ENCODE measurements at regions of chr4 and their contacts with region 1.

Region 1: DNA sequence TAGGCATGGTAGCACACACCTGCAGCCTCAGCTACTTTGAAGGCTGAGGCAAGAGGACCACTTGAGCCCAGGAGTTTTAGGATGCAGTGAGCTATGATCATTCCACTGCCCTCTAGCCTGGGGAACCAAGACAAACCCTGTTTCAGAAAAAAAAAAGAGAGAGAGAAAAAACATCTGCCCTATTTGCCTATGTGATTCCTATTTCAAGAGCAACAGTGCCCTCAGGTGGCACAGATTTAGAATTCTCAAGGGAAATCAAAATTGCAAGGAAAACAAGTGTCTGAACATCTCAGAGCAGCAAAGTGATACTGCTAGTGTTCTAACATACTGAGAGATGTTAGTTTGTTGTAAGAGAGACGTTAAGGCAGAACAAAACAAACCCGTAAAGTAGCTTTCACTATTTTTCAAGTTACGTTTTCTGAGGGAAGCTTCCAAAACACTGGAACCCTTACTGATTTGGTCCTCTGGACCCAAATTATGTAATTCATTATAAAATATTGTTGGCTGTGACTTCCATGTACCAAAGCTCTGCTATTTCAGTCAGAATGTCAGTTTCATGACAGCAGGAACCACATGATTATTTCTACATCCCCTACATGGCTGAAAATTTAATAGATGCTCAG is 7.9 kb downstream of the BDH2 start:
- DNase-seq: peak; percentile 61
- ATAC-seq: peak; percentile 71
- H3K4me3 Mint-ChIP-seq: no peak overlapping the region
- H3K27ac Mint-ChIP-seq: peak overlapping the region; percentile 34
- H3K4me1 Mint-ChIP-seq: peaks cover 17% of the 10 kb centered on the region
- H3K27me3 Mint-ChIP-seq: no peaks in the 10 kb centered on the region

Region 2: DNA sequence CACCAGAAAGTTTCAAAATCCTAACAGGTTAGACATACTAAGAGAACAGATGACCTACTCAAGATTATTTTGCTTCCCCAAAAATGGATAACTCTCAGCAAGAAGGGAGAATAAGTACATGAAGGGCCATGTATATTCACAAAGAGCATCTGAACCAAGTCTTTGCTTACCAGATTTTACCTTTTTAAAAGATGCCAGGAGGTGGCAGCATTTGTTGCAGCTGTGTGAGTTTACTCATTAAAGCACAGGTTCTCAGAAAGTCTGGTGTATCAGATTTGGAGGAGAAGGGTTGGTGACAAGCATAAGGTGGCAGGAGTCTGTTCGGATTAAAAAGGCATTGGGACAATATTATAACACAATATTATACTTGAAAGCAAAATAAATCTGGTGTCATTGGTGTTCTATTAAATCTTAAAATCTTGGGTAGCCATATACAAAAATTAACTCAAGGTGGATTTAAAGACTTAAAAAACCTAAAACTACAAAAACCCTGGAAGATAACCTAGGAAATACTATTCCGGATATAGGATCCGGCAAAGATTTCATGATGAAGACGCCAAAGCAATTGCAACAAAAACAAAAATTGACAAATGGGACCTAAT is 641.9 kb before region 1 on chr4:
- CTCF ChIA-PET with region 1: interaction called, 3 read pairs
- POLR2A ChIA-PET with region 1: no interaction called
- intact Hi-C with region 1: loop called in 1 of 2 experiments (anchors 5 kb)
- DNase-seq: peak; percentile 69
- ATAC-seq: peak; percentile 86
- H3K4me3 Mint-ChIP-seq: no peak overlapping the region
- H3K27ac Mint-ChIP-seq: no peak overlapping the region
- H3K4me1 Mint-ChIP-seq: peaks cover 54% of the 10 kb centered on the region
- H3K27me3 Mint-ChIP-seq: no peaks in the 10 kb centered on the region

Region 3: DNA sequence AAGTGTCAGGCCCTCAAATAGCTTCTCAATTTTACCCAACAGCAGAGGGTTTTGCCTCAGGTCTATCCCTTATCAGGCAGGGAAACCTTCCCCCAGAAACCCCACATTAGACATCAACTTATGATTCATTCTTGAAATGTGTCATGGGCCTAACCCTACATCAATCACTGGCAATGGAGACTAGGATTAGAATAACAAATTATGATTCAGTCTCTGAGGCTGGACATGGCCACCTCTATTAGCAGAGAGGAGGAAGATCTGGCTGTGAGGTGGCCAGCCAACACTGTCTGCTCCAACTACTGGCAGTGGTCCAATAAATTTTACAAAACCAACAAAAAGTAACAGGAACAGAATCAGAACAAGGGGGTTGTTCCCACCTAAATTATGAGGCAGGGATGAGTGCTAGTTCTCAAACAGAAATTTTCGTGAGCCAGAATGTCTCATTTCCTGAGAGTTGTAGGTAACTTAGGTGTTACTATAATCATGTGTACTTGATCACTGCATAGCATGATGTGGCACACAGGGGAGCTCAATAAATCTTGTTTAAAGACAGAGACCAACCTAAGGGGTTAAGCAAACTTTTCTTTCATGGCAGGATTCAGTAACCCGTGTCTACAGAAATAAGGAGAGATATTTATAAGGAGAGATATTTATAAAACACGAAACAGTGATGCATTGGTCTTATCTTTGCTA is 463.7 kb before region 1 on chr4:
- CTCF ChIA-PET with region 1: interaction called, 5 read pairs
- POLR2A ChIA-PET with region 1: no interaction called
- intact Hi-C with region 1: loop called in 1 of 2 experiments (anchors 1 kb)
- DNase-seq: peak; percentile 48
- ATAC-seq: peak; percentile 85
- H3K4me3 Mint-ChIP-seq: peak overlapping the region; percentile 50
- H3K27ac Mint-ChIP-seq: peak overlapping the region; percentile 86
- H3K4me1 Mint-ChIP-seq: peaks cover 69% of the 10 kb centered on the region
- H3K27me3 Mint-ChIP-seq: no peaks in the 10 kb centered on the region

Region 4: GRCh38 chr4:102787096-102787881 is 304.4 kb before region 1 on chr4:
- CTCF ChIA-PET with region 1: no interaction called
- POLR2A ChIA-PET with region 1: no interaction called
- intact Hi-C with region 1: no loop called
- DNase-seq: peak; percentile 15
- ATAC-seq: peak; percentile 74
- H3K4me3 Mint-ChIP-seq: no peak overlapping the region
- H3K27ac Mint-ChIP-seq: peak overlapping the region; percentile 75
- H3K4me1 Mint-ChIP-seq: peaks cover 29% of the 10 kb centered on the region
- H3K27me3 Mint-ChIP-seq: no peaks in the 10 kb centered on the region

Region 5: GRCh38 chr4:102981005-102981404 is 110.7 kb before region 1 on chr4:
- CTCF ChIA-PET with region 1: no interaction called
- POLR2A ChIA-PET with region 1: no interaction called
- intact Hi-C with region 1: no loop called
- DNase-seq: no peak
- ATAC-seq: no peak
- H3K4me3 Mint-ChIP-seq: no peak overlapping the region
- H3K27ac Mint-ChIP-seq: no peak overlapping the region
- H3K4me1 Mint-ChIP-seq: no peaks in the 10 kb centered on the region
- H3K27me3 Mint-ChIP-seq: no peaks in the 10 kb centered on the region

Region 6: GRCh38 chr4:103008875-103009729 is 82.6 kb before region 1 on chr4:
- CTCF ChIA-PET with region 1: interaction called, 15 read pairs
- POLR2A ChIA-PET with region 1: no interaction called
- intact Hi-C with region 1: no loop called
- DNase-seq: no peak
- ATAC-seq: peak; percentile 95
- H3K4me3 Mint-ChIP-seq: no peak overlapping the region
- H3K27ac Mint-ChIP-seq: no peak overlapping the region
- H3K4me1 Mint-ChIP-seq: no peaks in the 10 kb centered on the region
- H3K27me3 Mint-ChIP-seq: peaks cover 2% of the 10 kb centered on the region

Region 7: GRCh38 chr4:103075901-103076739 is 15.6 kb before region 1 on chr4:
- CTCF ChIA-PET with region 1: interaction called, 16 read pairs
- POLR2A ChIA-PET with region 1: no interaction called
- intact Hi-C with region 1: no loop called
- DNase-seq: peak; percentile 79
- ATAC-seq: peak; percentile 63
- H3K4me3 Mint-ChIP-seq: peak overlapping the region; percentile 84
- H3K27ac Mint-ChIP-seq: peak overlapping the region; percentile 99
- H3K4me1 Mint-ChIP-seq: peaks cover 45% of the 10 kb centered on the region
- H3K27me3 Mint-ChIP-seq: no peaks in the 10 kb centered on the region

Region 8: DNA sequence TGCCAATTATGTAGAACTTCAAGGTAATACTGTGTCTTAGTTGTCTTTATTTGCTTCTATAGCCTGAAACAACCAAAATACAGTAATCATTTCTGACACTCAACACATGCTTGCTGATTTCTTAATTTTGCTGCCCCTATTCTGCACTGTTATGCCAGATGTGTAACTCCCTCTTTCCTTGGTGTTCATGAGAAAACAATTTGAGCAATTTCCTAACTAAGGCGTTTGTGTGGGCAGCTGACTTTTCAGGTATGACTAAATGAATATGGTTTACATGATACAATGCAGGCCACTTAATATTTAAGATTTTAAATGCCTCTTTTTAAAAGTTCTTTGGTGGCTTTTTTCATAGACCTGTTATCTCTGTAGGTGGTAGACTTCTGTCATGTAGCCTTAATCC is 152.5 kb after region 1 on chr4:
- CTCF ChIA-PET with region 1: no interaction called
- POLR2A ChIA-PET with region 1: no interaction called
- intact Hi-C with region 1: no loop called
- DNase-seq: no peak
- ATAC-seq: no peak
- H3K4me3 Mint-ChIP-seq: no peak overlapping the region
- H3K27ac Mint-ChIP-seq: no peak overlapping the region
- H3K4me1 Mint-ChIP-seq: no peaks in the 10 kb centered on the region
- H3K27me3 Mint-ChIP-seq: peaks cover 7% of the 10 kb centered on the region

Measured in activated CD4-positive, alpha-beta T cell treated with anti-CD3 and anti-CD28 coated beads for 36 hours (primary cell).